ENCODE measurements at regions of chr3 and their contacts with region 1.

Region 1: DNA sequence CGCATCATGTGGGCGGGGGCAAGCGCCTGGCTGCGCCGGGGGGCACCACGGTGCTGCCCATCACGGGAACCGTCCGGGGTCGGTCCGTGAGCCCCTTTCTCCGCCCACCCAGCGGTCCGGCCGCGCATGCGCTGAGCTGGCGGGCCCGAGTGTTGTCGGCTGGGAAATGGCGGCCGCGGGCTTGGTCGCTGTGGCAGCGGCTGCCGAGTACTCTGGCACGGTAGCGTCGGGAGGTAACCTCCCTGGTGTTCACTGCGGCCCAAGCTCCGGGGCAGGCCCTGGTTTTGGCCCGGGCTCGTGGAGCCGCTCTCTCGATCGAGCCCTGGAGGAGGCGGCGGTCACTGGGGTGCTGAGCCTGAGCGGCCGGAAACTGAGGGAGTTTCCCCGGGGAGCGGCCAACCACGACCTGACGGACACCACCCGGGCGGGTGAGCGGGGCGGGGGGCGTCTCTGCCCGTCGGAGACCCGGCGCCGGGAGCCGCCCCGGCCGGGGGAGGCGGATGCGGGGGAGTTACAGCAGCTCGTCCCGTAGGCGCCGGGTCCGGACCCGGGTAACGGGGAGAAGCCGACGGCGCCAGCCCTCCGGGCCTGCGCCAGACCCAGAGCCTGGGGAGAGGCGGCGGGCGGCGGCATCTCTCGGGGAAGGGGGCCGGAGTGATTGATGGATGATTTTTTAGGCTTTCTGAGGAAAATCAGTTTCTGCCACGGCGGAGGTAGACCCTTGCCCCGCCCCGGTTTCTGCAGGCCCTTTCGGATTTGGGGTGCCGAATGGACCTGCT is at the start of gene LRCH3:
- DNase-seq: no peak
- ATAC-seq: peak; percentile 86
- H3K4me3 ChIP-seq: peak within 1 kb of the TSS; percentile 79
- H3K27ac ChIP-seq: peak within 1 kb of the TSS; percentile 97
- H3K4me1 ChIP-seq: peaks cover 19% of the 10 kb centered on the region; the same call in 1 of the 2 replicates
- H3K27me3 ChIP-seq: no peaks in the 10 kb centered on the region
- CTCF ChIP-seq: peak in 1 of 3 experiments; percentile 2; a peak in 1 of 6 replicates
- EP300 ChIP-seq: no peak
- POLR2A ChIP-seq: peak; percentile 96
- RAD21 ChIP-seq: no peak
- polyA plus RNA-seq, gene LRCH3: 3.9 to 7.3 TPM

Region 2: GRCh38 chr3:197711973-197712707 is 79.2 kb before region 1 on chr3:
- CTCF ChIA-PET with region 1: interaction called, 3 read pairs
- POLR2A ChIA-PET with region 1: interaction called, 5 read pairs
- RAD21 ChIA-PET with region 1: interaction called, 8 read pairs
- SMC1A ChIA-PET with region 1: interaction called, 13 read pairs
- in situ Hi-C with region 1: no loop called
- intact Hi-C with region 1: loop called (anchors 2 kb)
- DNase-seq: peak; percentile 97
- ATAC-seq: peak; percentile 87
- H3K4me3 ChIP-seq: peak overlapping the region; percentile 51
- H3K27ac ChIP-seq: peak overlapping the region; percentile 95
- H3K4me1 ChIP-seq: peaks cover 45% of the 10 kb centered on the region
- H3K27me3 ChIP-seq: no peaks in the 10 kb centered on the region
- CTCF ChIP-seq: no peak
- EP300 ChIP-seq: peak; percentile 98 to 100
- POLR2A ChIP-seq: peak; percentile 63
- RAD21 ChIP-seq: no peak

Region 3: DNA sequence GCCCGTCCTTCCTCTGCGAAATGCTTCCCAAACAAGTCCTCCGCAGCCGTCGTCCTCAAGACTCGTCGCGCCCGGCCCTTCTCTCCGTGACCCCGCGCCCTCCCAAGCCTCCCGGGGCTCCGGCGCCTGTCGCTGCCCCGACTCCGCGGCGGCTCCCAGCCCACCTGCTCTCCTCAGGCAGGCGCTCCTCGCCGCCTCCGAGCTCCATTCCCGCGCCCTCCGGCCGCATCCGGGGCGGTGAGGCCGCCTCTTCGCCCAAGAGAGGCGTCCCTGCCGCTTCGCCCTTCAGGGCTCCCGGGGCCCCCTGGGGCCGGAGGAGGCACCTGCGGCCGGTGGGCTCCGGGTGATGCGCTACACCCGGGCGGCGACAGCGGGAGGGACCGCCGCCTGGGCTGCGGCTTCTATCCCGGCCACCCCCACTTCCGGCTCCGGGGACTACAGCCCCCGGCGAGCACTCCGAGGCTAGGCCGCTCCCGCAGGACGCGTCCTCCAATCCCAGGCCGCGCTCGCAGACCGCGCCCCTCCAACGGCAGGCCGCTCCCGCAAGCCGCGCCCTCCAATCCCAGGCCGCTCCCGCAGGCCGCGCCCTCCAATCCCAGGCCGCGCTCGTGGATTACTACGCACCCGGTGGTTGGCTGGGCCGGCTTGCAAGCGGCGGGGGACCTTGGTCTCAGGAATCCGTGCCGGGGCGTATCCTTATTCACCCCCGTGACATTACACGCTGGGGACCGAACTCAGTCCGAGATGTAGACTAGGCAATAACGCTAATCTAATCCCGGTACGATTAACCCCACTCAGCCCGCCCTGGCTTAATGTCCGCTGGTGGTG is 54.6 kb before region 1 on chr3 and contains the start of gene RUBCN:
- CTCF ChIA-PET with region 1: interaction called, 3 read pairs
- POLR2A ChIA-PET with region 1: no interaction called
- RAD21 ChIA-PET with region 1: interaction called, 3 read pairs
- SMC1A ChIA-PET with region 1: interaction called, 6 read pairs
- in situ Hi-C with region 1: no loop called
- intact Hi-C with region 1: loop called (anchors 2 kb)
- DNase-seq: peak; percentile 81
- ATAC-seq: peak; percentile 88
- H3K4me3 ChIP-seq: peak within 1 kb of the TSS; percentile 81
- H3K27ac ChIP-seq: peak within 1 kb of the TSS; percentile 95
- H3K4me1 ChIP-seq: peaks cover 12% of the 10 kb centered on the region
- H3K27me3 ChIP-seq: no peaks in the 10 kb centered on the region
- CTCF ChIP-seq: no peak
- EP300 ChIP-seq: no peak; a peak in 1 of 4 replicates
- POLR2A ChIP-seq: peak; percentile 81
- RAD21 ChIP-seq: no peak
- polyA plus RNA-seq, gene RUBCN: 15.5 to 25.5 TPM

Region 4: GRCh38 chr3:197749601-197750395 is 41.5 kb before region 1 on chr3 and contains the start of gene FYTTD1:
- CTCF ChIA-PET with region 1: interaction called, 7 read pairs
- POLR2A ChIA-PET with region 1: interaction called, 10 read pairs
- RAD21 ChIA-PET with region 1: interaction called, 5 read pairs
- SMC1A ChIA-PET with region 1: interaction called, 14 read pairs
- in situ Hi-C with region 1: no loop called
- intact Hi-C with region 1: loop called (anchors 2 kb)
- DNase-seq: no peak
- ATAC-seq: peak; percentile 87
- H3K4me3 ChIP-seq: peak within 1 kb of the TSS; percentile 82
- H3K27ac ChIP-seq: peak within 1 kb of the TSS; percentile 84
- H3K4me1 ChIP-seq: peaks cover 19% of the 10 kb centered on the region
- H3K27me3 ChIP-seq: no peaks in the 10 kb centered on the region
- CTCF ChIP-seq: peak; percentile 47 to 63 (median 50); a peak in 5 of 6 replicates
- EP300 ChIP-seq: 0 out of 4 replicates have a peak, but pooled peaks of 1 of the 2 experiments have one; percentile 9
- POLR2A ChIP-seq: peak; percentile 75
- RAD21 ChIP-seq: peak; percentile 49
- polyA plus RNA-seq, gene FYTTD1: 25.5 to 35.5 TPM

Region 5: GRCh38 chr3:197801891-197802778 is 10.8 kb after region 1 on chr3:
- CTCF ChIA-PET with region 1: interaction called, 10 read pairs
- POLR2A ChIA-PET with region 1: interaction called, 5 read pairs
- RAD21 ChIA-PET with region 1: interaction called, 15 read pairs
- SMC1A ChIA-PET with region 1: interaction called, 13 read pairs
- in situ Hi-C with region 1: no loop called
- intact Hi-C with region 1: loop called (anchors 1 kb)
- DNase-seq: peak; percentile 40
- ATAC-seq: peak; percentile 68
- H3K4me3 ChIP-seq: peak overlapping the region; percentile 24; the same call in 1 of the 2 replicates
- H3K27ac ChIP-seq: peak overlapping the region; percentile 54
- H3K4me1 ChIP-seq: peaks cover 37% of the 10 kb centered on the region
- H3K27me3 ChIP-seq: no peaks in the 10 kb centered on the region
- CTCF ChIP-seq: peak; percentile 49 to 56 (median 51)
- EP300 ChIP-seq: no peak
- POLR2A ChIP-seq: no peak
- RAD21 ChIP-seq: peak; percentile 46

Region 6: GRCh38 chr3:197809356-197810020 is 18.2 kb after region 1 on chr3:
- CTCF ChIA-PET with region 1: interaction called, 11 read pairs
- POLR2A ChIA-PET with region 1: interaction called, 4 read pairs
- RAD21 ChIA-PET with region 1: interaction called, 5 read pairs
- SMC1A ChIA-PET with region 1: interaction called, 7 read pairs
- in situ Hi-C with region 1: no loop called
- intact Hi-C with region 1: no loop called
- DNase-seq: no peak
- ATAC-seq: peak; percentile 46
- H3K4me3 ChIP-seq: no peak overlapping the region
- H3K27ac ChIP-seq: peak overlapping the region; percentile 13; the same call in 1 of the 2 replicates
- H3K4me1 ChIP-seq: peaks cover 10% of the 10 kb centered on the region; the same call in 1 of the 2 replicates
- H3K27me3 ChIP-seq: no peaks in the 10 kb centered on the region
- CTCF ChIP-seq: no peak
- EP300 ChIP-seq: no peak
- POLR2A ChIP-seq: no peak
- RAD21 ChIP-seq: no peak

Region 7: GRCh38 chr3:197835509-197835908 is 44.2 kb after region 1 on chr3:
- CTCF ChIA-PET with region 1: no interaction called
- POLR2A ChIA-PET with region 1: interaction called, 3 read pairs
- RAD21 ChIA-PET with region 1: no interaction called
- SMC1A ChIA-PET with region 1: no interaction called
- in situ Hi-C with region 1: no loop called
- intact Hi-C with region 1: loop called (anchors 2 kb)
- DNase-seq: no peak
- ATAC-seq: peak; percentile 68
- H3K4me3 ChIP-seq: no peak overlapping the region
- H3K27ac ChIP-seq: peak overlapping the region; percentile 30
- H3K4me1 ChIP-seq: peaks cover 10% of the 10 kb centered on the region
- H3K27me3 ChIP-seq: no peaks in the 10 kb centered on the region
- CTCF ChIP-seq: no peak
- EP300 ChIP-seq: no peak
- POLR2A ChIP-seq: no peak
- RAD21 ChIP-seq: no peak

Region 8: GRCh38 chr3:197949754-197950660 is 158.7 kb after region 1 on chr3 and contains the start of gene RPL35A:
- CTCF ChIA-PET with region 1: no interaction called
- POLR2A ChIA-PET with region 1: no interaction called
- RAD21 ChIA-PET with region 1: no interaction called
- SMC1A ChIA-PET with region 1: no interaction called
- in situ Hi-C with region 1: no loop called
- intact Hi-C with region 1: no loop called
- DNase-seq: peak; percentile 98
- ATAC-seq: peak; percentile 89
- H3K4me3 ChIP-seq: peak within 1 kb of the TSS; percentile 95
- H3K27ac ChIP-seq: peak within 1 kb of the TSS; percentile 95
- H3K4me1 ChIP-seq: peaks cover 3% of the 10 kb centered on the region; the same call in 1 of the 2 replicates
- H3K27me3 ChIP-seq: no peaks in the 10 kb centered on the region
- CTCF ChIP-seq: no peak
- EP300 ChIP-seq: peak in 1 of 2 experiments; percentile 62; a peak in 2 of 4 replicates
- POLR2A ChIP-seq: peak; percentile 98
- RAD21 ChIP-seq: no peak
- polyA plus RNA-seq, gene RPL35A: 2,763 to 3,144 TPM

Measured in GM12878 (cell line).